ENCODE measurements at regions of chr10 and their contacts with region 1.

Region 1: GRCh38 chr10:57864765-57865676 is 402.7 kb downstream of the IPMK start:
- DNase-seq: peak; percentile 85 to 86
- H3K4me3 ChIP-seq: no peak overlapping the region
- H3K4me3 Mint-ChIP-seq: peak overlapping the region; percentile 36
- H3K27ac Mint-ChIP-seq: peak overlapping the region; percentile 86
- H3K4me1 ChIP-seq: peaks cover 29% of the 10 kb centered on the region
- H3K4me1 Mint-ChIP-seq: peaks cover 27% of the 10 kb centered on the region
- H3K27me3 ChIP-seq: no peaks in the 10 kb centered on the region
- H3K27me3 Mint-ChIP-seq: no peaks in the 10 kb centered on the region
- CTCF ChIP-seq: no peak

Region 2: DNA sequence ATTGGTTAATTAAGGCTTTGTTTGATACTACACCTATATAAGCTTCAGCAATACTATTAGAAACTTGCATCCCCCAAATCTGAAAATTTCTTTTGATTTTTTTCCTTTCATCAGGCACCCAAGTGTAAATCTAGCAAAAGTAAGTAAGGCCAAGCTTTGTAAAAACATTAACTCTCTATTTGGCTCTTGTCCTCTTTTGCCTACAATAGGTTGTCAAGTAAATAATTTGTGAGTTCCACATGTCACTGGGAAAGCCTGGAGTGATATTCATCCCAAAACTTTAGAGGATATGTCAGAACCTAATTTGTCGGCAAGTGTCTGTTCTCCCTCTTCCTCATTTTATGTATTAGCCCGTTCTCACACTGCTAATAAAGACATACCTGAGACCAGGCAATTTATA is 89.8 kb before region 1 on chr10:
- CTCF ChIA-PET with region 1: no interaction called
- POLR2A ChIA-PET with region 1: no interaction called
- intact Hi-C with region 1: no loop called
- DNase-seq: no peak
- H3K4me3 ChIP-seq: no peak overlapping the region
- H3K4me3 Mint-ChIP-seq: no peak overlapping the region
- H3K27ac Mint-ChIP-seq: no peak overlapping the region
- H3K4me1 ChIP-seq: no peaks in the 10 kb centered on the region
- H3K4me1 Mint-ChIP-seq: no peaks in the 10 kb centered on the region
- H3K27me3 ChIP-seq: no peaks in the 10 kb centered on the region
- H3K27me3 Mint-ChIP-seq: no peaks in the 10 kb centered on the region
- CTCF ChIP-seq: no peak

Region 3: DNA sequence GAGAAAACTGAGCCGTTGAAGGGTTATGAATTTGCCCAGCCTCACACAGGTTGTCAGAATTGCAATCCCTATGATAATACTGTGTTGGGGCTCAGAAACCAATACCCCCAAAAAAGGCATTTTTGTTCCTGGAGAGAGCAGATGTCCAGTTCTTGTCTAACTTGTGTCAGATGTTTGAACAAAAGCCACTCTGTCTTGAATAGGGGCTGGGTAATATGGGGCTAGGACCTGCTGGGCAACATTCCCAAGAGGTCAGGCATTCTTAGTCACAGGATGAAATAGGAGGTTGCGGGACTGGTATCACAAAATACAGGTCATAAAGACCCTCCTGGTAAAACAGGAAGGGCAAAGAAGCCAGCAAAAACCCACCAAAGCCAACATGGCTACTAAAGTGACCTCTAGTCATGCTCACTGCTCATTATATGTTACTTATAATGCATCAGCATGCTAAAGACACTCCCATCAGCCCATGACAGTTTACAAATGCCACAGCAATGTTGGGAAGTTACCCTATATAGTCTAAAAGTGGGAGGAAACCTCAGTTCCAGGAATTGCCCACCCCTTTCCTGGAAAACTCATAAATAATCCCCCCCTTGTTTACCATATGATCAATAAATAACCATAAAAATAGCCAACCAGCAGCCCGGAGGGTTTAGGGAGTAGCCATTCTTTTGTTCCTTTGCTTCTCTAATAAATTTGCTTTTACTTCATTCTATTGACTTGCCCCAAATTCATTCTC is 79.3 kb before region 1 on chr10:
- CTCF ChIA-PET with region 1: no interaction called
- POLR2A ChIA-PET with region 1: no interaction called
- intact Hi-C with region 1: loop called (anchors 1 kb)
- DNase-seq: peak; percentile 47 to 69
- H3K4me3 ChIP-seq: no peak overlapping the region
- H3K4me3 Mint-ChIP-seq: no peak overlapping the region
- H3K27ac Mint-ChIP-seq: peak overlapping the region; percentile 34
- H3K4me1 ChIP-seq: peaks cover 32% of the 10 kb centered on the region
- H3K4me1 Mint-ChIP-seq: peaks cover 19% of the 10 kb centered on the region
- H3K27me3 ChIP-seq: no peaks in the 10 kb centered on the region
- H3K27me3 Mint-ChIP-seq: no peaks in the 10 kb centered on the region
- CTCF ChIP-seq: no peak

Region 4: DNA sequence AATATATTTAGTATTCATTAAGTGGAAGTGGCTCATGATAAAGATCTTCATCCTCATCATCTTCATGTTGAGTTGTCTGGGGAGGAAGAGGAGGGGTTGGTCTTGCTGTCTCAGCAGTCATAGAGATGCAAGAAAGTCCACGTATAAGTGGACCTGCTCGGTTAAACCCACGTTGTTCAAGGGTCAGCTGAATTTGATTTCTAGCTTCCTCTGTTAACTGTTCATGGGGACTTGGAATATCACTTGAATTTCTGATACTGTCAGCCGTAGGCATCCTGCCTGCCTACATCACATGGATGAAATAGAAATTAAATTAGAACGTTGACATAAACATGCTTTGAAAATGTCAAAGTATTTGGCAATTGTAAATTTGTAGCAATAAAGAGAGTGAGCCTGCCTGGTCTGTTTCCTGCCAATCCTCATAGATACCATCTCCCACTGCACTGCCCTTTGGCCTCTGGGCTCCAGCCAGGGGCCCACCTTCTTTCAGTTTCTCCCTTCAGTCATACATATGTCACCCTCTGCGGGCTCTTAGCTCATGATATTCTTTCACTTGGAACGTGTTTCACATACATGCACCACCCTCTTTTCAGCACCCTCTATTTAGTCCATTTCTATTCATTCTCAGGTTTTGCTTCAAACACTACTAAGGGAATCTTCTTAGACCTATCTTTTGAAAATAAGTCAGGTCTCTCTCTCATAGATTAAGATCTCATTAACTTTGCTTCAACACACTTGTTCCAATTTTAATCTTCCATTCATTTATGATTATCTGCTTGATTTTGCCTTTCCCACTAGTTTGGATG is 26.4 kb after region 1 on chr10:
- CTCF ChIA-PET with region 1: no interaction called
- POLR2A ChIA-PET with region 1: no interaction called
- intact Hi-C with region 1: loop called (anchors 2 kb)
- DNase-seq: no peak
- H3K4me3 ChIP-seq: no peak overlapping the region
- H3K4me3 Mint-ChIP-seq: no peak overlapping the region
- H3K27ac Mint-ChIP-seq: no peak overlapping the region
- H3K4me1 ChIP-seq: peaks cover 4% of the 10 kb centered on the region; the same call in 1 of the 2 replicates
- H3K4me1 Mint-ChIP-seq: peaks cover 8% of the 10 kb centered on the region
- H3K27me3 ChIP-seq: no peaks in the 10 kb centered on the region
- H3K27me3 Mint-ChIP-seq: no peaks in the 10 kb centered on the region
- CTCF ChIP-seq: no peak

Region 5: DNA sequence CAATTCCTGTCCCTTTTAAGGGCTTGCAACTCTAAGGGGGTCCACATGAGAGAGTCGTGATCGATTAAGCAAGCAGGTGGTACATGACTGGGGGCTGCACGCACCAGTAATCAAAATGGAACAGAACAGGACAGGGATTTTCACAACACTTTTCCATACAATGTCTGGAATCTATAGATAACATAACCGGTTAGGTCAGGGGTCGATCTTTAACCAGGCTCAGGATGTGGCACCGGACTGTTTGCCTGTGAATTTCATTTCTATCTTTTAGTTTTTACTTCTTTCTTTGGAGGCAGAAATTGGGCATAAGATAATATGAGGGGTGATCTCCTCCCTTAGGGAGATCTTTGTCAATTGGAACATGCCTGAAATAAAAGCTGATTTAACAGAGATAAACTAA is 32.6 kb after region 1 on chr10:
- CTCF ChIA-PET with region 1: no interaction called
- POLR2A ChIA-PET with region 1: no interaction called
- intact Hi-C with region 1: loop called (anchors 1 kb)
- DNase-seq: peak; percentile 37 to 52
- H3K4me3 ChIP-seq: no peak overlapping the region
- H3K4me3 Mint-ChIP-seq: peak overlapping the region; percentile 42
- H3K27ac Mint-ChIP-seq: peak overlapping the region; percentile 52
- H3K4me1 ChIP-seq: peaks cover 26% of the 10 kb centered on the region
- H3K4me1 Mint-ChIP-seq: peaks cover 15% of the 10 kb centered on the region
- H3K27me3 ChIP-seq: no peaks in the 10 kb centered on the region
- H3K27me3 Mint-ChIP-seq: no peaks in the 10 kb centered on the region
- CTCF ChIP-seq: no peak

Region 6: DNA sequence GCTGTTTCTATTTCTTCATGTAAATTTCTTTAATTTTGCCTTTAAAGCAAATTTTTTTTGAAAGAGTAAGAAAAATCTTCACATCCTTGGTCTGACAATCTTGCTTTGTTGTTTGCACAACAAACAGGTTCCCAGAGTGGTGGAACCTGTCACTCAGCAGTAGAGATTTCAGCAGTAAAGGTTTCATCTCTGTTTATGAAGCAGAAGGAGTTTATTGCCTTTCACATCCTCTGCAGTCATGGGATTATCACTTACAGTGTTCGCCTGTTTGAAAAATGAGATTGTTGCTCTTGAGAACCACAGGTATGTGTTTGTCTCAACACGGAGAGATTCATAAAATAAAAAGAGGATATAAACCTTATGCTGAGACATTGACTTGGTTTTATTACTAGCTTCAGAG is 60.0 kb after region 1 on chr10:
- CTCF ChIA-PET with region 1: no interaction called
- POLR2A ChIA-PET with region 1: no interaction called
- intact Hi-C with region 1: loop called (anchors 1 kb)
- DNase-seq: peak; percentile 38 to 44
- H3K4me3 ChIP-seq: no peak overlapping the region
- H3K4me3 Mint-ChIP-seq: no peak overlapping the region
- H3K27ac Mint-ChIP-seq: no peak overlapping the region
- H3K4me1 ChIP-seq: peaks cover 6% of the 10 kb centered on the region
- H3K4me1 Mint-ChIP-seq: peaks cover 16% of the 10 kb centered on the region
- H3K27me3 ChIP-seq: no peaks in the 10 kb centered on the region
- H3K27me3 Mint-ChIP-seq: peaks cover 3% of the 10 kb centered on the region
- CTCF ChIP-seq: no peak

Region 7: GRCh38 chr10:57979466-57979865 is 114.4 kb after region 1 on chr10:
- CTCF ChIA-PET with region 1: no interaction called
- POLR2A ChIA-PET with region 1: no interaction called
- intact Hi-C with region 1: loop called (anchors 1 kb)
- DNase-seq: peak in 1 of 2 experiments; percentile 40
- H3K4me3 ChIP-seq: no peak overlapping the region
- H3K4me3 Mint-ChIP-seq: no peak overlapping the region
- H3K27ac Mint-ChIP-seq: peak overlapping the region; percentile 37
- H3K4me1 ChIP-seq: peaks cover 39% of the 10 kb centered on the region
- H3K4me1 Mint-ChIP-seq: peaks cover 42% of the 10 kb centered on the region
- H3K27me3 ChIP-seq: no peaks in the 10 kb centered on the region
- H3K27me3 Mint-ChIP-seq: no peaks in the 10 kb centered on the region
- CTCF ChIP-seq: no peak

Measured in Caco-2 (cell line).